Heart right ventricle (tissue), 16 donors: ENCODE measurements at regions of chr10 and their contacts with region 1.

Region 1: GRCh38 chr10:22988581-22989360 is 60.9 kb downstream of the ARMC3 start:
- DNase-seq: peak in 1 of 2 donors; percentile 71
- ATAC-seq: peak; percentile 58 to 88 (median 78)
- H3K4me3 ChIP-seq: peak overlapping the region in 2 of 10 donors; percentile 23 to 32
- H3K27ac ChIP-seq: no peak overlapping the region
- H3K4me1 ChIP-seq: peaks cover 0 to 13% (median 2%) of the 10 kb centered on the region in 9 donors
- H3K27me3 ChIP-seq: peaks cover 0 to 3% (median 0%) of the 10 kb centered on the region in 7 donors
- CTCF ChIP-seq: peak; percentile 80 to 96 (median 91)

Region 2: DNA sequence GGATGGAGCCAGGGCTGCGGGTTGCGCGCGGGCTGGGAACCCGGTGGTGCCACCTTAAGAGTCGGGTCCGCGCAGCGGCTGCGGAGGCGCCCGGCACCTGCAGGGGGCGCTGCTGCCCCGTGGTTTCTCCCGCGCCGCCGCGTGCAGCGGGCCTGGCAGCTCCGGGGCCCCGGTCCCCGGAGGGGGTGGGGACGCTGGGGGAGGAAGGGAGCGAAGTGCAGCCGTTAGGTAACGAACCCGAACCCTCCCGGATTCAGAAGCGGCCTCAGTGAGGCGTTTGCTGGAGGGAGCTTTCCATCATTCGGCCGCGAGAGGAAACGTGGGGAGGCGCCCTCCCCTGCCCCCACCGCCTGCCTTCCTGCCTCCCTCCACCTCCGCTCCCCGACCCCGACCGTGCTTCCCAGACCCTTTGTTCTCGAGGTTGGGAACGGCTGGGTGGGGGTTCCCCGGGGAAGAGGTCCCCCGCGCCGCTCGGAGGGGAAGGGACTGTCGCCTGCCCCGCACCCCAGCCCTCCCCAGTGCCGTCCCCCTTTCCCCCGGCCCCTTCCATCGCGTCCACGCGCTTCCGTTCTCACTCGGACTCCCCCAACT is 1492.9 kb before region 1 on chr10:
- intact Hi-C with region 1: loop called in 3 of 10 experiments (anchors 5 to 10 kb)
- DNase-seq: peak; percentile 81 to 89
- ATAC-seq: peak; percentile 82 to 90 (median 88)
- H3K4me3 ChIP-seq: peak overlapping the region; percentile 57 to 89 (median 80)
- H3K27ac ChIP-seq: peak overlapping the region in 9 of 10 donors; percentile 79 to 91 (median 85)
- H3K4me1 ChIP-seq: peaks cover 0 to 51% (median 15%) of the 10 kb centered on the region in 9 donors
- H3K27me3 ChIP-seq: peaks cover 0 to 68% (median 0%) of the 10 kb centered on the region in 7 donors
- CTCF ChIP-seq: peak; percentile 90 to 100 (median 99)

Region 3: GRCh38 chr10:22003079-22003913 is 985.5 kb before region 1 on chr10 and contains the start of gene DNAJC1:
- intact Hi-C with region 1: loop called in 2 of 10 experiments (anchors 5 kb)
- DNase-seq: peak; percentile 98 to 99
- ATAC-seq: peak; percentile 99 to 100 (median 100)
- H3K4me3 ChIP-seq: peak within 1 kb of the TSS; percentile 52 to 94 (median 80)
- H3K27ac ChIP-seq: peak within 1 kb of the TSS; percentile 72 to 98 (median 94)
- H3K4me1 ChIP-seq: peaks cover 0 to 28% (median 16%) of the 10 kb centered on the region in 9 donors
- H3K27me3 ChIP-seq: no peaks in the 10 kb centered on the region
- CTCF ChIP-seq: peak in 4 of 9 donors; percentile 5 to 21 (median 11)
- total RNA-seq, gene DNAJC1: 8.9 to 18.1 (median 11.4) TPM

Region 4: GRCh38 chr10:22325272-22326144 is 663.3 kb before region 1 on chr10:
- intact Hi-C with region 1: loop called in 2 of 10 experiments (anchors 10 kb)
- DNase-seq: peak; percentile 77 to 80
- ATAC-seq: peak; percentile 32 to 66 (median 52)
- H3K4me3 ChIP-seq: peak overlapping the region; percentile 29 to 72 (median 64)
- H3K27ac ChIP-seq: peak overlapping the region in 9 of 10 donors; percentile 45 to 78 (median 59)
- H3K4me1 ChIP-seq: peaks cover 3 to 41% (median 35%) of the 10 kb centered on the region in 9 donors
- H3K27me3 ChIP-seq: peaks cover 0 to 33% (median 5%) of the 10 kb centered on the region in 7 donors
- CTCF ChIP-seq: peak in 2 of 9 donors; percentile 9 to 11

Region 5: DNA sequence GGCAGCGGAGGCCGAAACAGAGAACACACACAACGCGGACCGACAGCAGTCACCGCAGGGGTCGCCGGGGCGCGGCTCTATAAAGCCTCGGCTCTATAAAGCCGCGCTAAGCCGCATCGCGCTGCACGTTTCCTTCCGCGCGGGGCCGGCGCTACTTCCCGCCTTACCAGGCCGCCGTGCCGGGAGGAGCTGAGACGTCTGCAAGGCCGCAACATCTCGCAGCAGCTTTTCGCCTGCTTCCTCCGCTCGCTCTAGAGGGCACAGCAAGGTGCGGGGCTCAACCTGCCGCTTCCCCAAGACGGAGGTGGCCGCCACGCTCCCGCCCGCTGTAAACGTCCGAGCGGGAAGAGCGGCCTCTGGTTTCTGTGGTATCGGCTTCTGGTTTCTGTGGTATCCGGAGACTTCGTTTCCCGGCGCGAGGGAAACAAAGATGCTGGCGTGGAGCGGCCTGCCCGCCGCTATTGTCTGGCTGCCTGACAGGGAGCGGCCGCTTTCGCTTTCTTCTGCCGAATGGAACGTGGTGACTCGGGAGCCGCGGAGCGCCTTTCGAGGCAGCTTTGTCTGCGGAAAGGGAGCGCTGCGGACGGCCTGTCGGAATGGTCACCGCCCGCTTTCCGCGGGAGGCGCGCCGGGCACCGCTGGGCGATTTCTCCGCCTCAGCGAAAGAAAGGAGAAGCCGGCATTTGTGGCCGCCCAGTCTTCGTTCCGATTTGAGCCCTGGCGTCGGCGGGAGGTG is 551.7 kb before region 1 on chr10:
- intact Hi-C with region 1: loop called in 1 of 10 experiments (anchors 10 kb)
- DNase-seq: peak; percentile 92 to 93
- ATAC-seq: peak; percentile 94 to 98 (median 97)
- H3K4me3 ChIP-seq: peak overlapping the region; percentile 65 to 88 (median 78)
- H3K27ac ChIP-seq: peak overlapping the region; percentile 91 to 98 (median 95)
- H3K4me1 ChIP-seq: peaks cover 0 to 29% (median 20%) of the 10 kb centered on the region in 9 donors
- H3K27me3 ChIP-seq: peaks cover 0 to 15% (median 0%) of the 10 kb centered on the region in 7 donors
- CTCF ChIP-seq: peak in 5 of 9 donors; percentile 3 to 49 (median 22)

Region 6: GRCh38 chr10:22580711-22581110 is 408.1 kb before region 1 on chr10:
- intact Hi-C with region 1: loop called in 3 of 10 experiments (anchors 5 to 10 kb)
- DNase-seq: no peak
- ATAC-seq: no peak
- H3K4me3 ChIP-seq: no peak overlapping the region
- H3K27ac ChIP-seq: peak overlapping the region in 1 of 10 donors; percentile 39
- H3K4me1 ChIP-seq: peaks cover 0 to 4% (median 0%) of the 10 kb centered on the region in 9 donors
- H3K27me3 ChIP-seq: no peaks in the 10 kb centered on the region
- CTCF ChIP-seq: no peak

Region 7: DNA sequence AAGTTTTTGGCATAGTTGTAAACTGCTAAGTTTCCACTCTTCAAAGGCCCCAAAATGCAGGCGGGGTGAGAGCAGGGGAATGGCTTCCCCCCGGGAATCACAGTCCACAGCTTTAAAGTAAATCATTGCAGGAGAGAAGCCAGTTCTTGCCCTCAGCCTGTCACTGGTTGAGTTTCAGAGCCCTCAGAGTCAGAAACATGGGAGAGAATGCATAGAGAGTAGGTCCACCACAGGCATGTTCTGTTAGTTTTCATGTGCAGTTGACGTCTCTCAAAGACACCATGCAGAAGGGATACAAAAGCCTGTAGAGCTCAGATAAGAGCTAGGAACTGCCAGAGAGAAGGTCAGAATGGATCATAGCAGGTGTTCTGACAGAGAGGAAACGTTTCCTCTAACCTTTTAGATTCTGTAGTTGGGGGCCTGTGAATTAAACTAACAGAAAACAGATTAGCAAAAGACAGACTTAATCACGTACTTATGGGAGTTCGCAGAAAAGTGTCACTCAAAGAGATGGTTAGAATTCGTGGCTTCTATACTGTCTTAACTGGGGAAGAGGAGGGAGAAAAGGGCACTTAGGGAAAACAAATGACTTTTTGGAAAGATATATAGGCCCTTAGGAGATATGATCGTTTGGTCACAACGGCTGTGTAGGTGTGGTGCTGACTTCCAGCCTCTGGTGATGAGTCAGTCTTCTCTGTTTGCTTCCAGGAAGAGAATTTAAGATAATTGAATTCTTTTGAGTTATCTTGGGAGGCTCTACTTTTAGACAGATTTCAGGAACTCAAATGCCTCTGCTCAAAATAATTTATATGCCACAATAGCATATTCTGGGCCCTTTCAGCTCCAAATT is 58.7 kb after region 1 on chr10:
- intact Hi-C with region 1: no loop called
- DNase-seq: no peak
- ATAC-seq: peak in 5 of 8 donors; percentile 62 to 86 (median 71)
- H3K4me3 ChIP-seq: no peak overlapping the region
- H3K27ac ChIP-seq: peak overlapping the region in 4 of 10 donors; percentile 9 to 27 (median 14)
- H3K4me1 ChIP-seq: peaks cover 0 to 24% (median 11%) of the 10 kb centered on the region in 9 donors
- H3K27me3 ChIP-seq: no peaks in the 10 kb centered on the region
- CTCF ChIP-seq: no peak

Region 8: GRCh38 chr10:23067939-23068775 is 79.4 kb after region 1 on chr10:
- intact Hi-C with region 1: loop called in 5 of 10 experiments (anchors 2 to 5 kb)
- DNase-seq: peak; percentile 62 to 72
- ATAC-seq: peak; percentile 46 to 76 (median 72)
- H3K4me3 ChIP-seq: no peak overlapping the region
- H3K27ac ChIP-seq: no peak overlapping the region
- H3K4me1 ChIP-seq: peaks cover 5 to 29% (median 18%) of the 10 kb centered on the region in 9 donors
- H3K27me3 ChIP-seq: no peaks in the 10 kb centered on the region
- CTCF ChIP-seq: peak; percentile 66 to 84 (median 77)